Mammary epithelial cell (primary cell): ENCODE measurements at regions of chr5 and their contacts with region 1.

Region 1: GRCh38 chr5:130541617-130542221 is 623.3 kb downstream of the HINT1 start:
- DNase-seq: peak; percentile 84
- H3K4me3 ChIP-seq: no peak overlapping the region
- H3K27ac ChIP-seq: peak overlapping the region; percentile 63
- H3K4me1 ChIP-seq: peaks cover 35% of the 10 kb centered on the region
- H3K27me3 ChIP-seq: no peaks in the 10 kb centered on the region
- CTCF ChIP-seq: no peak

Region 2: DNA sequence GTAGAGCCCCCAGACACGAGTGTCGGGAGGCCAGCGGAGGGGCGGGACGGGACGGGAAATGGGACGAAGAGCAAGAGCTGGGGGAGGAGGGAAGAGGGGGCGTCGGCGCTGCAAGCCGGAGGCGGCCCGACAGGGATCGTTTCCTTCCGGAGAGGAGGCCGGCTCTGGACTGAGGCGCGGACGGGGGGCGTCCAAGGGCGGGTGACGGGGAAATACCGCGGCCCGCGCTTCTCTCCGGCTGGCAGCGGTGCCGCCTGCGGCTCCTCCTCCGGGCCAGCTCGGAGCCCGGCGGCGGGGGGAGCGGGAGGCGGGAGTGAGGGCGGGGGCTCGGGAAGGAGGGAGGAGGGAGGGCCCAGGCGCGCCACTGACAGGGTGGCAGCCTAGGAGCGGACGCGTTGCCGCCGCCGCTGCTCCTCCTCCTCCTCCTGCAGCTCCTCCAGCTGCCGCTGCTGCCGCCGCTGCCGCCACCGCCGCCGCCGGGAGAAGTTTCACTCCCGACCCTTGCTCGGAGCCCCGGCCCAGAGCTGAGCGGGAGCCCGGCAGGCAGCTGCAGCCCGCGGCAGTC is 637.5 kb before region 1 on chr5 and contains the start of gene CHSY3:
- CTCF ChIA-PET with region 1: no interaction called
- dilution Hi-C with region 1: no loop called
- in situ Hi-C with region 1: no loop called
- intact Hi-C with region 1: loop called (anchors 10 kb)
- DNase-seq: peak; percentile 86
- H3K4me3 ChIP-seq: peak within 1 kb of the TSS; percentile 11 to 62 (median 57)
- H3K27ac ChIP-seq: no peak within 1 kb of the TSS
- H3K4me1 ChIP-seq: peaks cover 14% of the 10 kb centered on the region
- H3K27me3 ChIP-seq: peaks cover 18% of the 10 kb centered on the region
- CTCF ChIP-seq: no peak
- total RNA-seq, gene CHSY3: 1.7 to 1.8 TPM

Region 3: GRCh38 chr5:130198925-130199324 is 342.8 kb before region 1 on chr5:
- CTCF ChIA-PET with region 1: no interaction called
- dilution Hi-C with region 1: no loop called
- in situ Hi-C with region 1: no loop called
- intact Hi-C with region 1: loop called (anchors 2 kb)
- DNase-seq: no peak
- H3K4me3 ChIP-seq: no peak overlapping the region
- H3K27ac ChIP-seq: no peak overlapping the region
- H3K4me1 ChIP-seq: no peaks in the 10 kb centered on the region
- H3K27me3 ChIP-seq: no peaks in the 10 kb centered on the region
- CTCF ChIP-seq: no peak

Region 4: DNA sequence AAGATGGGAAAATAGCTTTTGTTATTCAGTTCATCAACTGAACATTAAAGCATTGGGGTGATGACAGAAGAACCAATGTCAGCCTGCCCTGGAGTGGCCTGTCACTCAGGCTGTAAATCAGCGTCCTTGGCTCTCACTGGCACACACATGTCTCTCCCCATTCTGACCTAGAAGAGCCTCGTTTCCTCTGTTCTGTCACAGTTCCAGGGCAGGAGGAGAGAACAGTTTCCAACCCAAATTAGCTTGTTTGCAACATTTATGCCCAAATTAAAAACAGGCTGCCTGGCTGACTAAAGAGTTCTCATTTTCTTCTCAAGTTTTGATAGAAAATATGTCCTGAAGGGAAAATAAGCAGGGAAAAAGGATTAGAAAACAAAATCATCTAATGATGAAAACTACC is 117.4 kb before region 1 on chr5:
- CTCF ChIA-PET with region 1: no interaction called
- dilution Hi-C with region 1: no loop called
- in situ Hi-C with region 1: no loop called
- intact Hi-C with region 1: loop called (anchors 10 kb)
- DNase-seq: no peak
- H3K4me3 ChIP-seq: no peak overlapping the region
- H3K27ac ChIP-seq: no peak overlapping the region
- H3K4me1 ChIP-seq: no peaks in the 10 kb centered on the region
- H3K27me3 ChIP-seq: no peaks in the 10 kb centered on the region
- CTCF ChIP-seq: no peak